ENCODE measurements at regions of chr1 and their contacts with region 1.

Region 1: GRCh38 chr1:181479137-181479745 is 4.1 kb upstream of the CACNA1E start:
- DNase-seq: peak; percentile 57
- H3K4me3 ChIP-seq: no peak overlapping the region
- H3K27ac ChIP-seq: no peak overlapping the region
- H3K4me1 ChIP-seq: no peaks in the 10 kb centered on the region
- CTCF ChIP-seq: peak; percentile 83

Region 2: GRCh38 chr1:181504399-181504842 is 25.2 kb after region 1 on chr1:
- CTCF ChIA-PET with region 1: interaction called, 3 read pairs
- POLR2A ChIA-PET with region 1: no interaction called
- intact Hi-C with region 1: loop called (anchors 1 kb)
- DNase-seq: peak; percentile 65
- H3K4me3 ChIP-seq: no peak overlapping the region
- H3K27ac ChIP-seq: no peak overlapping the region
- H3K4me1 ChIP-seq: peaks cover 8% of the 10 kb centered on the region
- CTCF ChIP-seq: peak; percentile 76

Region 3: GRCh38 chr1:181676269-181676668 is 197.0 kb after region 1 on chr1:
- CTCF ChIA-PET with region 1: no interaction called
- POLR2A ChIA-PET with region 1: no interaction called
- intact Hi-C with region 1: loop called (anchors 1 kb)
- DNase-seq: peak; percentile 29
- H3K4me3 ChIP-seq: no peak overlapping the region
- H3K27ac ChIP-seq: no peak overlapping the region
- H3K4me1 ChIP-seq: no peaks in the 10 kb centered on the region
- CTCF ChIP-seq: peak; percentile 70

Region 4: GRCh38 chr1:181936768-181937581 is 457.7 kb after region 1 on chr1:
- CTCF ChIA-PET with region 1: no interaction called
- POLR2A ChIA-PET with region 1: interaction called, 3 read pairs
- intact Hi-C with region 1: loop called (anchors 1 kb)
- DNase-seq: peak; percentile 70
- H3K4me3 ChIP-seq: no peak overlapping the region
- H3K27ac ChIP-seq: no peak overlapping the region
- H3K4me1 ChIP-seq: no peaks in the 10 kb centered on the region
- CTCF ChIP-seq: peak; percentile 87

Region 5: DNA sequence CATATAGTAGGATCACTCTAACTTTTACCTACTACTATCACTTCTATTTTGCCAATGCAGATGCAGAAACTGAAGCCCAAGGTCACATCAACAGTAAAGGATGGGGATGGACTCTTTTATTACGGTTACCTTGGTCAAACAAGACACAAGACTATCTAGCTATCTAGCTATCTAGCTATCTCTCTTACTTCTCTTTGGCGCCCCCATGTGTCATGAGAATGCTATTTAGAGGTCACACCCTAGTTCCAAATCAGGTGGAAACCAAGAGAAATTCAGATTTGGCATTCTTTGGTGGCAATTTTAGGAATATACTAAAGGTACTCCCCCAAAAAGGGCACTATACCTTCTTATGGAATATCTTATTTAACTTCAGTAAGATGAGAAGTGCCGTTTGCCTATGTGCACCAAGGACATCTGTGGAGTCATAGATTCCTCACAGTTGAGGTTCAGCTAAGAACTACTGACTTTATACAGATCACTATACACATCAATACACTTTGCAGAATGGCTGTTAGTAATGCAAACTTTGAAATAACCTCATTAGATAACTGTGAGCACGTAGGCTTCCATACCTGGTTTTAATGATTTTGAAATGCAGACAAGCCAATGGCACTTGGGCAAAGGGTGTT is 575.6 kb after region 1 on chr1:
- CTCF ChIA-PET with region 1: no interaction called
- POLR2A ChIA-PET with region 1: no interaction called
- intact Hi-C with region 1: loop called (anchors 10 kb)
- DNase-seq: peak; percentile 62
- H3K4me3 ChIP-seq: no peak overlapping the region
- H3K27ac ChIP-seq: no peak overlapping the region
- H3K4me1 ChIP-seq: no peaks in the 10 kb centered on the region
- CTCF ChIP-seq: peak; percentile 89